ENCODE measurements at regions of chr2 and their contacts with region 1.

Region 1: DNA sequence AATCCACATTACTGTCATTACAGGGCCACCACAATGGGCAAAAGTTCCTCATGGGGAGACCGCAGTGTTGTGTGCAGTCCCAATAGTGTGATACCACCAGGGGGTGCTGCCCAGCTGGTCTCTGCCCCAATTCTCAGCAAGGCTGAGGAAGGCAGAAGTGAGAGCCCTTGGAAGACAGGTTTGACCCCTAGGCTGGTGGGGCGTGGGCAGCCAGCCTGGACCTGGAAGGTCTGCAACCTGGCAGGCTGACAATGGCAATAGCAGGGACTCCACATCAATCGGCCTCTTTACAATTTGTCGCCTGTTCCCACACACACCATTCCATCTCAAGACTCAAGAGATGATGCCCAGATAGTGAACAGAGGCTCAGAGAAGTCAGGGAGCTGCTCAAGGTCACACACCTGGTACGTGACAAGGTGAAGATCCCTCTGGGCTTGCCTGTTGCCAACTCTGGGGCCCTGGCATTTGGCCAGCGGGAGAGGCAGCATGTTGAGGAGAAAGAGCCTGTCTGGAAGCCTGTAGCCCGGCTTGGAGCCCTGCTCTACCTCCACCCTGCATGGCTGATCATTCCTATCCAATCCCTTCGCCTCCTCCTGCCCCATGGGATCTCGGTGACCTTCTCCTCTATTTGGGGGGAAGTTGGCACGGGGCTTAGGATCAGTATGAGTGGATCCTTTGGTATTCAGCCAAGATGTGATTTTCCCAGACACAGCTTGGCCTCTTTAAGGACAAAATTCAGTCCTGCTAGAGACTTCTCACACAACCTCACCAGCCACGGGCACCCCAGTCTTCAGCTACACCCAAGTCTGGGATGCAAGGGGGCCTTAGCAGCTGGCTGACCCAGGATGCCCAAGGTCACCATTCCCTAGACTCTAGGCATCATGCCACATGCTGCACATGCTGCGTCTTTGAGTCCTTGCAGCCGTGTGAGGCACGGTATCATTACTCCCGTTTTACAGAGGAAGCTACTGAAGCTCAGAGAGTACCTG is 2.9 kb upstream of the ATOH8 start:
- DNase-seq: no peak
- H3K4me3 ChIP-seq: no peak overlapping the region
- CTCF ChIP-seq: peak; percentile 87

Region 2: DNA sequence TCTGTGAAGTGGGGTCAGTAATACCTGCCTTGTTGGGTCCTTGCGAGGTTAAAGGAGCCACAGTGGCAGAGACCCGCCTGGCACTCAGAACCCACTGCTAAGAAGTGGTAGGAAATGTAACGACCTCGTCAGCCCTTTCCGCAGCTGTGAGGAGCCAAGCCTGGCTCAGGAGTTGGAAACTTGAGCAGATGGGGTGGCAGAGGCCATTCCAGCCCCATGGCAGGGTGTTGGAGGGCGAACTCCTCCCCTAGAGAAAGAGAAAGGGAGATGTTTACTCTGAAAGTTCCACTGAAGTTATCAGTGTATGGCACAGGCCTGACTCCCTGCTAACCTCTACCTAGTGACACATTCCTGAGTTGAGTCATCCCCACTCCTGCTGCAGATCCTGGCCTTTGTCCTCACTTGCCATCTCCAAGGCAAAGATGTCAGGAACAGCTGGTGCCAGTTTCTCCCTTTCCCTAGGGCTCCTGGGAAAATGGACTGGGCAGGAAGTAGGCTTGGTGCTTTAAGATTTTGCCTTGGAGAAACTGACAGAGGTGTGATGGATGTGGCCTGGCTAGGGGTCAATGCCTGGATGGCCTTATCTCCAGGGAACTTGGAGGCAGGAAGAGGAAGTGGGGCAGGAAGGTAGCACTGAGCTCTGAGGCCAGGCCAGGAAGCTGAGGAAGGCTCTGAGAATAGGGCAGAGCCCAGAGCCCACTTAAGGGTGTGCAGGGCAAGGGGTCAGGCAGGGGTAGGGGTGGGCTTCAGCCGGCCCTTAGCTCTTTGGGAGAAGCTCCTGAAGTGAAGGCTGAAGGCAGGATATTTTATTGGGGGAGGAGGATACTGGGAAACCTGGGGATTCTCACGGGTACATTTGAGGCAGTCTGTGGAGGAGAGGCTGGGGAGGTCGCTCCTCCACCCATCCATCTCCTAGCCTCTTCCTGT is 165.8 kb before region 1 on chr2:
- CTCF ChIA-PET with region 1: no interaction called
- POLR2A ChIA-PET with region 1: no interaction called
- DNase-seq: no peak
- H3K4me3 ChIP-seq: peak overlapping the region; percentile 60
- CTCF ChIP-seq: no peak

Region 3: DNA sequence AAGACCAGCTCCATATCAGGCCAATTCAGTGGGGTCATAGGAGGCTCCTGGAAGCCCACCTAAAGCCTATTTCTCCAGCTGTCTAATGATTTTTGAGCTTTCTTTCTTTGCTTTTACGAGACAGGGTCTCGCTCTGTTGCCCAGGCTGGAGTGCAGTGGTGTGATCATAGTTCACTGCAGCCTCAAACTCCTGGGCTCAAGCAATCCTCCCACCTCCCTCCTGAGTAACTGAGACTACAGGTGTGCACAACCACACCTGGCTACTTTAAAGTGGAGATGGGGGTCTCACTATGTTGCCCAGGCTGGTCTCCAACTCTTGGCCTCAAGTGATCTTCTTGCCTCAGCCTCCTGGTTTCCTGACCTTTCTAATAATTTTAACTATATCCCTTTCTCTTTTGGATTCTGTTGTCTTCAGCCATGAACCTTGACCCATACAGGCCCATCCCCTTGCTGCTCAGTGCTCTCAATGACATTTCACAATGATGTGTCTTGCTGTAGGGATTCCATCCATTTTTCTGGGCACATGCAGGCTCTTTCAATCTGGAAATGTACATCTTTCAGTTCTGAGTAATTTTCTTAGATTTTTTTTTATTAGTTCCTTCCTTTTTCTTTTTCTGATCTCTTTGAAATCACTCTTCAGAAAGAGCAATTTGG is 27.0 kb before region 1 on chr2:
- CTCF ChIA-PET with region 1: interaction called, 69 read pairs
- POLR2A ChIA-PET with region 1: no interaction called
- DNase-seq: no peak
- H3K4me3 ChIP-seq: no peak overlapping the region
- CTCF ChIP-seq: no peak

Region 4: GRCh38 chr2:85785027-85785822 is 34.3 kb after region 1 on chr2:
- CTCF ChIA-PET with region 1: interaction called, 14 read pairs
- POLR2A ChIA-PET with region 1: no interaction called
- DNase-seq: peak; percentile 59
- H3K4me3 ChIP-seq: peak overlapping the region; percentile 8; the same call in 1 of the 2 replicates
- CTCF ChIP-seq: no peak

Region 5: GRCh38 chr2:85959826-85960225 is 208.9 kb after region 1 on chr2:
- CTCF ChIA-PET with region 1: no interaction called
- POLR2A ChIA-PET with region 1: no interaction called
- DNase-seq: no peak
- H3K4me3 ChIP-seq: no peak overlapping the region
- CTCF ChIP-seq: no peak

Measured in AG04449 (cell line).